IMR-90 (cell line): ENCODE measurements at regions of chr20 and their contacts with region 1.

Region 1: GRCh38 chr20:54429363-54429762 is 46.0 kb upstream of the DOK5 start:
- DNase-seq: no peak
- ATAC-seq: no peak
- H3K4me3 ChIP-seq: no peak overlapping the region
- H3K27ac ChIP-seq: no peak overlapping the region
- H3K4me1 ChIP-seq: no peaks in the 10 kb centered on the region
- H3K27me3 ChIP-seq: no peaks in the 10 kb centered on the region
- CTCF ChIP-seq: no peak
- POLR2A ChIP-seq: no peak
- RAD21 ChIP-seq: no peak

Region 2: DNA sequence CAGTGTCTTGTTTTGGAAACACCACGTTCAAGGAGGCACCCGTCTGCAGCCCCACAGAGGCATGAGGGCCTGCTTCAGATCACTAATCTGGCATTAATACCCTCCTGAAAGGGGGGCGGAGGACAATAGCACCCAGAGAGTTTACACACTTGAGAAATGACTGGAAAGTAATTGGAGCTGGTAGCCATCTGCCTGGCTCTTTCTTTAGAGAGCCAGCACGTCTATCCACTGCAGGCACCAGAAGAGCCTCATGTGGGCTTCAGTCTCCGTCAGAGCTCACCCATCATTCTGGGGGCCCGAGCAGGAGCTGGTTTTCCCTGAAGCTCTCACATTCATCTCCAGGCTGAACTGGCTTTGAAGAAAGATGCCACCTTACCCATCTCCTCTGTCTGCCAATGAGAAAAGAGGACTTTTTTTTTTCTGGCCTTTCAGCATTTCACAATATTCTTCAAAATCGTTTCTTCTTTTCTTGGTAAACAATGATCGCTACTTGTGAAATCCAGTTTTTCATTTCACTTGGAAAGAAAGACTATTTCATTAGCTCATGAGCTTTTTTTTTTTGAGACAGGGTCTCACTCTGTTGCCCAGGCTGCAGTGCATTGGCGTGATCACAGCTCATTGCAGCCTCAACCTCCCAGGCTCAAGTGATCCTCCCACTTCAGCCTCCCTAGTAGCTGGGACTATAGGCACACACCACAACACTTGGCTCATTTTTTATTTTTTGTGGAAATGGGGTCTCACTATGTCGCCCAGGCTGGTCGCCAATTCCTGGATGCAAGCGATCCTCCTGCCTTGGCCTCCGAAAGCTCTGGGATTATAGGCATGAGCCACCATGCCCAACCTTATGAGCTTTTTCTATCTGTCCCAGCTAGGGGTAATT is 711.0 kb before region 1 on chr20:
- CTCF ChIA-PET with region 1: no interaction called
- POLR2A ChIA-PET with region 1: no interaction called
- dilution Hi-C with region 1: no loop called
- in situ Hi-C with region 1: no loop called
- intact Hi-C with region 1: no loop called
- DNase-seq: no peak
- ATAC-seq: no peak
- H3K4me3 ChIP-seq: no peak overlapping the region
- H3K27ac ChIP-seq: no peak overlapping the region
- H3K4me1 ChIP-seq: no peaks in the 10 kb centered on the region; the same call in 1 of the 2 replicates
- H3K27me3 ChIP-seq: no peaks in the 10 kb centered on the region
- CTCF ChIP-seq: no peak
- POLR2A ChIP-seq: no peak
- RAD21 ChIP-seq: no peak

Region 3: DNA sequence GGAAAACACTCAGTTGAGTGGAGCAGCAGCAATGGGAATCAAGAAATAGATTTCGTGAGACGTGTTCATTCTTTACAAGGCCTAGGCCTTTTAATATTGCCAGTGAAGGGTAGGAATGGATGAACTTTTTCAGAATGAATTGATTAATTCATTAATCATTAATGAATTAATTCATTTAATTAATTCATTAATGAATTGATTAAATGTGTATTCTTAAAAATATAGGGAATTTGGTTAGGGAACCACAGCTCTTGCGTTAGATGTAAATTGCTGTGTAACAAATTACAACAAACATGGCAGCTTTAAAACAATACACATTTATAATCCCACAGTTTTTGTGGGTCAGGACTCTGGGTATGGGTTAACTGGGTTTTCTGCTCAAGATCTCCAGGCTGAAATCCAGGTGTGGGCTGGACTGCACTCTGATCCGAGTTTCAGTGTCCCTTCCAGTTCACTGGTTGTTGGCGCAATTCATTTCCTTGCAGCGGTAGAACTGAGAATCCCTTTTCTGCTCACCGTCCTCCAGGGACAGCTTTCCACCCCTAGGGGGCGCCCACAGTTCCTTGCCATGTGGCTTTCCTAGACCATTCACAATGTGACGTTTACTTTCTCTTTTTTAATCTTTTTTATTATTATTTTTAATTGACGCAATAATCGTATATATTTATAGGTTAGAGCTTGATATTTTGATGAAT is 326.1 kb before region 1 on chr20:
- CTCF ChIA-PET with region 1: no interaction called
- POLR2A ChIA-PET with region 1: no interaction called
- dilution Hi-C with region 1: no loop called
- in situ Hi-C with region 1: no loop called
- intact Hi-C with region 1: no loop called
- DNase-seq: peak; percentile 64
- ATAC-seq: peak; percentile 86
- H3K4me3 ChIP-seq: no peak overlapping the region
- H3K27ac ChIP-seq: no peak overlapping the region
- H3K4me1 ChIP-seq: no peaks in the 10 kb centered on the region
- H3K27me3 ChIP-seq: peaks cover 2% of the 10 kb centered on the region; the same call in 1 of the 2 replicates
- CTCF ChIP-seq: peak; percentile 89
- POLR2A ChIP-seq: no peak
- RAD21 ChIP-seq: peak; percentile 77

Region 4: DNA sequence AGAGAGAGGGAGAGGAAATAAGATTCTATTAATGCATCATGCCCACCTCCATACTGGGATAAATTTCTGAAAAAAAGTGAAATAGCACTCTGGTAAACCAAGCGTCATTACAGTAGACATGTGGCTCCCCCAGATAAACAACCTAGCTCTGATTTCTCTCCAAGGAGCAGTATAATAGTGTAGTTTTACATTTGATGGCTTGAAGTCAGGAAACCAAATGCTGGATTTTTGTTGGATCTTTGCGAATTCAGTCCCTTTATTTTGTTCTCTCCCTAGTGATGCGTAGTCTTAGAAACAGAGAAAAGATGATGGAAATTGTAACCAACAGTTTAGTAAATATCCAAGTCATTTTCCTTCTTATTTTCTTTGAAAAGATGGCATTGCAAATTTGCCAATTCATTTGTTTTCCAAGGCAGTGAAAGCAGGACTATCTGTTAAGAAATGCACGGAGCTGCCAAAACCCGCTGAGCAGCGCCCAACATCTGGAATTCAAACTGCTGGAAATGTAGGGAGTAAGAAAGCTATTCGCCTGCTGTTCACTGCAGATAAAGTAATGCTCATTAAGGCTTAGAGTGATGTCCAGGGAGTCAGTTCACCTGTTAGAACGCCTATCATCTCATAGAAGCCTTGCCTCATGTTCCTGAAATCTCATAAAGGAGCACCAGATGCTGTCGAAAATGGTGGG is 39.6 kb before region 1 on chr20:
- CTCF ChIA-PET with region 1: no interaction called
- POLR2A ChIA-PET with region 1: no interaction called
- dilution Hi-C with region 1: no loop called
- in situ Hi-C with region 1: no loop called
- intact Hi-C with region 1: loop called (anchors 5 kb)
- DNase-seq: no peak
- ATAC-seq: no peak
- H3K4me3 ChIP-seq: no peak overlapping the region
- H3K27ac ChIP-seq: no peak overlapping the region
- H3K4me1 ChIP-seq: no peaks in the 10 kb centered on the region
- H3K27me3 ChIP-seq: peaks cover 2% of the 10 kb centered on the region; the same call in 1 of the 2 replicates
- CTCF ChIP-seq: no peak
- POLR2A ChIP-seq: no peak
- RAD21 ChIP-seq: no peak